Cardiac septum (tissue), 1 donor: ENCODE measurements at regions of chr2 and their contacts with region 1.

Region 1: GRCh38 chr2:144996225-144996795 is 476.4 kb upstream of the ZEB2 start:
- DNase-seq: no peak

Region 2: GRCh38 chr2:144645083-144645778 is 351.1 kb before region 1 on chr2:
- intact Hi-C with region 1: no loop called
- DNase-seq: no peak

Region 3: DNA sequence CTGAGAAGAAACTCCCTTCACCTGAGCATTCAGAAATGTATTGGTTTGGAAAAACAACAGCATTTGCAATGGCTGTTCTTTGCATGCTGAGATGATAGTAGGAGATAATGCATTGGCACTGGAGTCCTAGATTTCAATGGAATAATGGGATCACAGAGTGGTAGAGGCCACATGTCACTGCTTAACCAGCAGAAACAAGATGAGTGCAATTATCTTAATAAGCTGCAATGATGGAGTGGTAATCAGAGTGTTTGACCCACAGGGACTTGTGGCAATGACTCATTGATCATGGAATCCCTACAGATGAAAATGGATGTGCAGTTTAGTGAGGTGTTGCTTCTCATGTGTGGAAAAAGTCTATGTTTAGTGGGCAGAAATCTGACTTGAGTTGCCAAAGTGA is 257.6 kb before region 1 on chr2:
- intact Hi-C with region 1: no loop called
- DNase-seq: no peak

Region 4: DNA sequence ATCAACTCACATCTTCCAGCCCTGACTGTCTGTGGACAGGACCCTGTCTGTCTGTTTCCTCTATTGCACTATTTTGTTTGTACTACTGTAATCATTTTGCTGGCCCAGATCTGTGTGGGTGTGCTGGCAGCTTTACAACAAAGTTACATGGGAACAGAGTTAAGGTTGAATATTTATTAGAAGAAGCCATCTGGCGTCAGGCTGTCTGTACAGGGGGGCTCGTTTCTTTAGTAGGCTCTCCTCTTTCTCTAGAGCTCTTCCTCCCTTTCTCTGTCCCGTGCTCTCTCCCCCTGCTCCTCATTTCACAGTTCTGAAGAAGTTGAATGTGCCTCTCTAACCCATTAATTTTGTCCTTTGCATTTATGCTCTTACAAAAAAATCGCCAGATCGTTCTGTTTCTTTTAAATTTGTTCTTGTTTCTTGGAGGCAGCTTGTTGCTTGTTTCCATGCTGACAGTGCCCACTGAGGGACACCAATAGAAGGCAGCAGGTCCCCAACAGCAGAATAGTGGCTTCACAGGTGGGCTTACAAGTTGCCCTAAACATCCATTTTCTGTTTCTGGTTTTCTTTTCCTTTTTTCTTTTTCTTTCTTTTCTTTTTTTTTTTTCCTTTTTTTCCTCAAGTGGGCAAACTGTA is 161.2 kb before region 1 on chr2:
- intact Hi-C with region 1: loop called (anchors 2 kb)
- DNase-seq: no peak